ENCODE measurements at regions of chr16 and their contacts with region 1.

Region 1: GRCh38 chr16:79415983-79416640 is 184.4 kb downstream of the MAF start:
- DNase-seq: peak in 4 of 5 donors; percentile 29 to 53 (median 46)
- H3K4me3 ChIP-seq: peak overlapping the region in 1 of 2 donors; percentile 16
- H3K4me3 Mint-ChIP-seq: peak overlapping the region; percentile 43 to 80 (median 72)
- H3K27ac ChIP-seq: no peak overlapping the region
- H3K27ac Mint-ChIP-seq: peak overlapping the region; percentile 9 to 90 (median 81)
- H3K4me1 ChIP-seq: peaks cover 39% of the 10 kb centered on the region
- H3K4me1 Mint-ChIP-seq: peaks cover 33 to 57% (median 47%) of the 10 kb centered on the region in 4 donors
- H3K27me3 ChIP-seq: no peaks in the 10 kb centered on the region
- H3K27me3 Mint-ChIP-seq: no peaks in the 10 kb centered on the region

Region 2: GRCh38 chr16:79261481-79261940 is 154.6 kb before region 1 on chr16:
- CTCF ChIA-PET with region 1: interaction called, 16 read pairs
- POLR2A ChIA-PET with region 1: no interaction called
- intact Hi-C with region 1: no loop called
- DNase-seq: peak in 4 of 5 donors; percentile 43 to 51 (median 47)
- H3K4me3 ChIP-seq: no peak overlapping the region
- H3K4me3 Mint-ChIP-seq: no peak overlapping the region
- H3K27ac ChIP-seq: no peak overlapping the region
- H3K27ac Mint-ChIP-seq: peak overlapping the region in 3 of 7 donors; percentile 4 to 77 (median 23)
- H3K4me1 ChIP-seq: peaks cover 7% of the 10 kb centered on the region
- H3K4me1 Mint-ChIP-seq: peaks cover 8 to 43% (median 17%) of the 10 kb centered on the region in 4 donors
- H3K27me3 ChIP-seq: no peaks in the 10 kb centered on the region
- H3K27me3 Mint-ChIP-seq: no peaks in the 10 kb centered on the region

Region 3: GRCh38 chr16:79381552-79382042 is 34.5 kb before region 1 on chr16:
- CTCF ChIA-PET with region 1: interaction called, 4 read pairs
- POLR2A ChIA-PET with region 1: interaction called, 9 read pairs
- intact Hi-C with region 1: loop called (anchors 5 kb)
- DNase-seq: peak in 4 of 5 donors; percentile 24 to 39 (median 34)
- H3K4me3 ChIP-seq: peak overlapping the region in 1 of 2 donors; percentile 21
- H3K4me3 Mint-ChIP-seq: peak overlapping the region; percentile 67 to 85 (median 76)
- H3K27ac ChIP-seq: peak overlapping the region; percentile 16
- H3K27ac Mint-ChIP-seq: peak overlapping the region; percentile 71 to 95 (median 93)
- H3K4me1 ChIP-seq: peaks cover 34% of the 10 kb centered on the region
- H3K4me1 Mint-ChIP-seq: peaks cover 27 to 38% (median 33%) of the 10 kb centered on the region in 4 donors
- H3K27me3 ChIP-seq: no peaks in the 10 kb centered on the region
- H3K27me3 Mint-ChIP-seq: no peaks in the 10 kb centered on the region